A549 (cell line): ENCODE measurements at regions of chr5 and their contacts with region 1.

Region 1: GRCh38 chr5:159987031-159987674 is 21.8 kb upstream of the TTC1 start:
- DNase-seq: peak; percentile 76 to 86
- ATAC-seq: peak; percentile 96 to 99
- H3K4me3 ChIP-seq: peak overlapping the region; percentile 43
- H3K27ac ChIP-seq: peak overlapping the region in 1 of 2 experiments; percentile 14; a peak in 1 of 6 replicates
- H3K4me1 ChIP-seq: no peaks in the 10 kb centered on the region
- CTCF ChIP-seq: peak; percentile 80
- EP300 ChIP-seq: no peak
- POLR2A ChIP-seq: no peak
- RAD21 ChIP-seq: peak; percentile 95

Region 2: GRCh38 chr5:159316519-159317383 is 670.4 kb before region 1 on chr5:
- CTCF ChIA-PET with region 1: interaction called, 10 read pairs
- POLR2A ChIA-PET with region 1: no interaction called
- DNase-seq: peak; percentile 60 to 79
- ATAC-seq: peak; percentile 93 to 98
- H3K4me3 ChIP-seq: no peak overlapping the region
- H3K27ac ChIP-seq: no peak overlapping the region
- H3K4me1 ChIP-seq: no peaks in the 10 kb centered on the region
- CTCF ChIP-seq: peak; percentile 77
- EP300 ChIP-seq: no peak
- POLR2A ChIP-seq: no peak
- RAD21 ChIP-seq: peak; percentile 85 to 88

Region 3: DNA sequence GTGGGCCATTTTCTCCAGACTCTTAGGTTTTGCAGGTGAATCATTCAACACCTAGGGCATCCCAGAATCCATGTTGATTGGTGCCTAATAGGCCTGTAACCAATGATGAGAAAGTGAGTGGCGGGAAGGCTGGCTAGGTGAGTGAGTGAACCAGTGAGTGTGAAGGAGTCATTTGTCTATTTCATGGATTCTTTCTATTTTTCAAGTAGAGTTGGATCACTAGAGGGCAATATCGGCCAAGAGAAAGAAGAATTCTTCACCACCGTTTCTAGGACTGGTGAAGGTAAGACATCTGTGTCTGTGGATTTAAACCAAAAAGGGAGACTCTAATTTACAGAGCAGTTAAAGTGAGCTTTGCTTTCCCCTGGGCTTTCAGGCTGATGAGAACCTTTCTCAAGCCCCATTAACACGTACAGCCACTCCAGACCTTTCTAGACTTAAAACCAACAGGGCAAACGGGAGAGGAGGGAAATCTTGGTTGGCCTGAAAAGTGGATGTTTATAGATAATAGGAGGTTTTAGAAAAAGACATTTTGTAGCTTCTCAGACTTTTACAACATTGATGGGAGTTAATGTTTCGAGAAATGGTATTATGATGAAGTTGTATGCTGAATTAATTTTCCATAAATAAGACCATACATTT is 542.6 kb before region 1 on chr5:
- CTCF ChIA-PET with region 1: interaction called, 157 read pairs
- POLR2A ChIA-PET with region 1: no interaction called
- DNase-seq: peak; percentile 77 to 78
- ATAC-seq: peak; percentile 76 to 86
- H3K4me3 ChIP-seq: no peak overlapping the region
- H3K27ac ChIP-seq: peak overlapping the region; percentile 62 to 66
- H3K4me1 ChIP-seq: peaks cover 28% of the 10 kb centered on the region
- CTCF ChIP-seq: peak; percentile 85
- EP300 ChIP-seq: no peak
- POLR2A ChIP-seq: no peak
- RAD21 ChIP-seq: peak; percentile 96 to 98

Region 4: DNA sequence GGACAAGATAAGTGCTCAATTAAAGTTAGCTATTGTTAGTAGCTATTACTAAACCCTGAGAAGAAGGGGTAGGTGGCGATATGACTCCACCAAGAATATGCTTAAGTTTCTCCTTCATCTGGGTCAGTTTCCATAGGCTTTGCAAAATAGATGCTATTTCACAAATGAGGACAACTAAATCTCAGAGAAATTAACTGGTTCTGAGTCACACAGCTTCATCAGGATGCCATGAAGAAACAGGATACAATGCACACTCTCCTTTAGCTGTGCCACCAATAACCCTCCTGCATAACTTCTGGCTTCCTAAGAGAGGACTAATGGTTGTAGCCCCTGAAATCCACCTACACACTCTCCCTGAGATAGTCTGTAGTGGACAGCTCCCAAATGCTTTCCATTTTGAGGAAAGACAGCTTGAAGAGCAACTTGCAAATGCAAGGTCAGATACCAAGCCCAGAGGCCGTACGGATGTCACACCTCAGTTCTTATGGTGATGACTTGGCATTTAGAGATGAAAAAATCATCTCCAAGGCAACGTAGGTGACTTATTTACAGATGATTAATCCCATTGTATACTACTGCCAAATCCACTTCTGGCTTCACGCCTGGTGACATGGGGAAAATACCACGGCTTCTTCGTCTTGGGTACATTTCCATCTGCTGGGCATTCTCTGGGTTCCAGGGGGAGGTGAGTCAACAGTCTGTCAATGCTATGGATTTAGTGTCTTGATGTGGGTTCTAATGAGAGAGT is 405.5 kb before region 1 on chr5:
- CTCF ChIA-PET with region 1: interaction called, 39 read pairs
- POLR2A ChIA-PET with region 1: no interaction called
- DNase-seq: peak; percentile 77 to 97
- ATAC-seq: peak; percentile 86 to 88
- H3K4me3 ChIP-seq: no peak overlapping the region
- H3K27ac ChIP-seq: peak overlapping the region; percentile 74 to 87
- H3K4me1 ChIP-seq: peaks cover 66% of the 10 kb centered on the region
- CTCF ChIP-seq: peak; percentile 52
- EP300 ChIP-seq: peak; percentile 77 to 84; a peak in 3 of 5 replicates
- POLR2A ChIP-seq: no peak
- RAD21 ChIP-seq: peak; percentile 58 to 67

Region 5: GRCh38 chr5:159897786-159898393 is 89.3 kb before region 1 on chr5:
- CTCF ChIA-PET with region 1: no interaction called
- POLR2A ChIA-PET with region 1: no interaction called
- DNase-seq: no peak
- ATAC-seq: no peak
- H3K4me3 ChIP-seq: no peak overlapping the region
- H3K27ac ChIP-seq: peak overlapping the region; percentile 44 to 77; a peak in 5 of 6 replicates
- H3K4me1 ChIP-seq: peaks cover 47% of the 10 kb centered on the region
- CTCF ChIP-seq: no peak
- EP300 ChIP-seq: no peak
- POLR2A ChIP-seq: no peak
- RAD21 ChIP-seq: no peak

Region 6: DNA sequence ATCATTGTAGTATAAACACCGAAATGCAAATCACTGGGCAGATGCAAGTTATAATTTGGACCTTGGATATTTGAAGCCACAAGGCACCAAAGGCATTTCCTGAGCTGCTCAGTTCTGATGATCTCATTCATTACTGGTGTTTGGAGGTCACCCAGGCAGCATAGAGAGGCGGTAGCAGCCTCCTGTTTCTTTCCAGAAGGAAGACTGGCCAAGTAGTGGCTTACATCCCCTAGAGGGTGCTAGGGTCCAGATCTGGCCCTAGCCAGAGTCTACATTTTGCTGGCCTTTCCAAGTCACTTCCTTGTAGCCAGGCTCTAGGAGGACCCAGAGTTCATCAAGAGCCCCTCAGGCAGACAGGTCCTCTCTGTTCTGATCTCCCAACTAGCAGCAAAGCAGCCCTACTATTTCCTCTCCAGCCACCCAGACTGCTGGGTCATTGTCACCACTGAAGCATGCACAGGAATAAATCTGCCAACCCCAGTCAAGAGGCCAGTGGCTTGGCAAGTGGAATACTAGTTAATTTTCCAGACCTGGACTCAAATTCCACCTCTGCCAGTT is 11.6 kb before region 1 on chr5:
- CTCF ChIA-PET with region 1: interaction called, 34 read pairs
- POLR2A ChIA-PET with region 1: no interaction called
- DNase-seq: peak; percentile 26 to 52
- ATAC-seq: peak; percentile 68 to 88; a peak in 5 of 6 replicates
- H3K4me3 ChIP-seq: no peak overlapping the region
- H3K27ac ChIP-seq: no peak overlapping the region
- H3K4me1 ChIP-seq: peaks cover 13% of the 10 kb centered on the region
- CTCF ChIP-seq: no peak; the same call in 2 of the 3 replicates
- EP300 ChIP-seq: no peak
- POLR2A ChIP-seq: no peak
- RAD21 ChIP-seq: 0 out of 5 replicates have a peak, but pooled peaks of 1 of the 2 experiments have one; percentile 3